Activated T-helper 1 cell treated with anti-CD3 and anti-CD28 coated beads, Interleukin-12 subunit alpha, Interleukin-12 subunit beta, Interleukin-2, Interleukin-4 antibody, amounts not matched to agents 30 ng/mL and 10 ng/mL and 1 ng/mL, durations not matched to agents 14 hours and 24 hours and 36 hours (primary cell): ENCODE measurements at regions of chr6 and their contacts with region 1.

Region 1: DNA sequence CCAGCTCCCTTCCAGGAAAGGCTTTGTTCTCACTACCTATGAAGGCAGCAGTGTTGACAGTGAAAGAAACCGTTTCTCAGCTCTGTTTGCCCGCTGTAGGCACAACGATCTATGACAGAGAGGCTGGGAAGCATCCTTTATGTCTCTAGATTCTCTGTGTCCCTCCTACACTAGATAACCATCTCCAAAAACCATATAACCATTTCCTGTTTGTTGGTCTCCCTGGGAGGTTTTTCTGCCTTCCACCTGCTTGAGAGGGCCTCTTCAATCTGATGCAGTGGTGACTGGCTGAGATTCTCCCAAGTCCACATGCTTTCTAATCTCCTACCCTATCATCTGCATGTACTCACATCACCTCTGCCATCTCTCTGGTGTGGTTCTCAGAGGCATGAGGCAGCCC is 32.0 kb upstream of the TMEM217 start:
- DNase-seq: peak; percentile 54
- H3K4me3 Mint-ChIP-seq: peak overlapping the region; percentile 55
- H3K27ac Mint-ChIP-seq: peak overlapping the region; percentile 89
- H3K4me1 Mint-ChIP-seq: peaks cover 49% of the 10 kb centered on the region
- H3K27me3 Mint-ChIP-seq: no peaks in the 10 kb centered on the region

Region 2: GRCh38 chr6:36160147-36160760 is 1129.7 kb before region 1 on chr6:
- intact Hi-C with region 1: no loop called
- DNase-seq: no peak
- H3K4me3 Mint-ChIP-seq: no peak overlapping the region
- H3K27ac Mint-ChIP-seq: no peak overlapping the region
- H3K4me1 Mint-ChIP-seq: no peaks in the 10 kb centered on the region
- H3K27me3 Mint-ChIP-seq: no peaks in the 10 kb centered on the region

Region 3: GRCh38 chr6:37239950-37240713 is 49.8 kb before region 1 on chr6:
- intact Hi-C with region 1: loop called (anchors 1 kb)
- DNase-seq: peak; percentile 49
- H3K4me3 Mint-ChIP-seq: peak overlapping the region; percentile 38
- H3K27ac Mint-ChIP-seq: peak overlapping the region; percentile 90
- H3K4me1 Mint-ChIP-seq: peaks cover 64% of the 10 kb centered on the region
- H3K27me3 Mint-ChIP-seq: no peaks in the 10 kb centered on the region

Region 4: GRCh38 chr6:37272834-37273566 is 16.9 kb before region 1 on chr6:
- intact Hi-C with region 1: loop called (anchors 1 kb)
- DNase-seq: no peak
- H3K4me3 Mint-ChIP-seq: peak overlapping the region; percentile 81
- H3K27ac Mint-ChIP-seq: peak overlapping the region; percentile 92
- H3K4me1 Mint-ChIP-seq: peaks cover 82% of the 10 kb centered on the region
- H3K27me3 Mint-ChIP-seq: no peaks in the 10 kb centered on the region